ENCODE measurements at regions of chr12 and their contacts with region 1.

Region 1: DNA sequence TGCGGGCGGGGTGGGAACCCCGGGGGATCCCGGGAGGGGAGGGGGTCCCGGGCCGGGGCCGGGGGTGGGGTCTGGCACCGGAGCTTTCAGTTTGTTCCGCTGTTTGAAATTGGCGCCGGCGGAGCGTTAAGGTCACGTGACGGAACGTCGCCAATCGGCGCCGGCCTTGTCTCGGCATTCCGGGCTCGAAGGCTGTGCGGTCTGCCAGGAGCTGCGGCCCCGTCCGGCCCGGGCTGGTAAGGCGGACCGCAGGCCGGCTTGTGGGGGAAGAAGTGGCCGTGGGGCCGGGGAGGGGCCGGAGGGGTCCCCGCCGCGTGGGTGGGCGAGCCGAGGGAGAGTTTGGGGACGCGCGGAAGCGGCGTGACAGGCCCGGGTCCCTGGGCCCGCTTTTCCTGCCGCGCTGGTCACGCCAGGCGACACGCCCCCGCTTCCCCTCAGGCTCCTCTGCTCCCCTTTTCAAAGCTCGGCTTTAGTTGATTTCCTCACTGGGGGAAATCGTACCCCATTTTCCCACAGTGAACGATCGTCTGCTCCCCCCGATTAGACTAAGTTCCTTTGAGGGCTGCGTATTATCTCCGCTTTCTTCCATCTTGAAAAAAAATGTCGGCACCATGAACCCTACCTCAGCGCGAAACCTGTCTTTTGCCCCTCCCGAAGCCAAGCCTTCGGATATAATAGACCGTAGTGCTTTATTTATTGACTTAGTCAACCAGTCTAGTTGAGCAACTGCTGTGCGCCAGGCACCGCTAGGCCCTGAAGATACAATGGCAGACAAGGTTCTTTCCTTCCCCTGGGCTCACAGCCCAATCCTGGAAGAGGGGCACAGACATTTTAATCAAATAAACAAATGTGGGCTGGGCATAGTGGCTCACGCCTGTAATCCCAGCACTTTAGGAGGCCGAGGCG is at the starts of genes FOXM1 and RHNO1:
- DNase-seq: peak; percentile 89
- ATAC-seq: peak; percentile 83
- H3K4me3 Mint-ChIP-seq: peak within 1 kb of the TSS; percentile 94
- H3K27ac Mint-ChIP-seq: peak within 1 kb of the TSS; percentile 94
- H3K4me1 Mint-ChIP-seq: peaks cover 28% of the 10 kb centered on the region
- H3K27me3 Mint-ChIP-seq: no peaks in the 10 kb centered on the region
- CTCF ChIP-seq: no peak
- total RNA-seq, gene FOXM1: 1.8 and 2.8 TPM in 2 replicates
- total RNA-seq, gene RHNO1: 12.4 and 14.4 TPM in 2 replicates

Region 2: GRCh38 chr12:2794736-2795289 is 82.5 kb before region 1 on chr12 and contains the start of gene FKBP4:
- CTCF ChIA-PET with region 1: interaction called, 4 read pairs
- POLR2A ChIA-PET with region 1: interaction called, 12 read pairs
- intact Hi-C with region 1: loop called (anchors 2 kb)
- DNase-seq: peak; percentile 85
- ATAC-seq: peak; percentile 89
- H3K4me3 Mint-ChIP-seq: peak within 1 kb of the TSS; percentile 89
- H3K27ac Mint-ChIP-seq: peak within 1 kb of the TSS; percentile 81
- H3K4me1 Mint-ChIP-seq: peaks cover 20% of the 10 kb centered on the region
- H3K27me3 Mint-ChIP-seq: no peaks in the 10 kb centered on the region
- CTCF ChIP-seq: no peak
- total RNA-seq, gene FKBP4: 90.5 and 94.7 TPM in 2 replicates

Measured in activated B cell treated with CpG ODN at 0.5 μM for 24 hours (primary cell).